HAP-1 (cell line): ENCODE measurements at regions of chrX and their contacts with region 1.

Region 1: DNA sequence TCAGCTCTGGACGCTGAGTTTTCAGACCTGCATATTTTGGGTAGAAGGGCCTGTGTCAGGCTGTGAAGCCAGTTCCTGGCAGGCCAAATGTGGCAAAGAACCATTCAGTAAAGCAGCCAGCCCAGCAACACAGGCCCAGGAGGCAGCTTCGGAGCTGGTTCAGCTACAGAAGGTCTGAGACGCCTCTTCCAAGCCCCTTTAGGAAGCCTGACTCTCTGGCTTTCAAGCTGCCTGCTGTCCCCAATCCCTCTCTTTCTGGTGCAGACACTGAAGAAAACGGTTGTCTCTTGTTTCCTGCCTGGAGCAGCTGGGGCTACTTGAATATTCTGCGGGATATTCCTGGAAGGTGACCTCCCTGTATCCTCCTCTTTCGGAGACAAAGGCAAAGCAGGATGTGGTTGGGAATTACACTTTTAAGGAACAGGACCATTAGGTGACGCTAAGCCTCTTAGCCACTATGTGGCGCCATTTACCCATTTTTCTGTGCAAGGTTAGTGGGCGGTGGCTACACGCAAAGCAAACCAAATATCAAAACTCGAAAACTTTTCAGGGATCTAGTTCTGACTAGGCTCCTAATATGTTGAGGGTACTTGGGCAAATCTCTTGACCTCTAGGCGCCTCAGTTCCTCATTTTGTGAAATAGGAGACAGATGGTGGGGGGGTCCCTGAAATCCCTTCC is 47.2 kb upstream of the LAS1L start:
- DNase-seq: peak; percentile 75 to 76
- H3K4me3 ChIP-seq: no peak overlapping the region
- H3K4me1 ChIP-seq: no peaks in the 10 kb centered on the region
- H3K27me3 ChIP-seq: no peaks in the 10 kb centered on the region

Region 2: DNA sequence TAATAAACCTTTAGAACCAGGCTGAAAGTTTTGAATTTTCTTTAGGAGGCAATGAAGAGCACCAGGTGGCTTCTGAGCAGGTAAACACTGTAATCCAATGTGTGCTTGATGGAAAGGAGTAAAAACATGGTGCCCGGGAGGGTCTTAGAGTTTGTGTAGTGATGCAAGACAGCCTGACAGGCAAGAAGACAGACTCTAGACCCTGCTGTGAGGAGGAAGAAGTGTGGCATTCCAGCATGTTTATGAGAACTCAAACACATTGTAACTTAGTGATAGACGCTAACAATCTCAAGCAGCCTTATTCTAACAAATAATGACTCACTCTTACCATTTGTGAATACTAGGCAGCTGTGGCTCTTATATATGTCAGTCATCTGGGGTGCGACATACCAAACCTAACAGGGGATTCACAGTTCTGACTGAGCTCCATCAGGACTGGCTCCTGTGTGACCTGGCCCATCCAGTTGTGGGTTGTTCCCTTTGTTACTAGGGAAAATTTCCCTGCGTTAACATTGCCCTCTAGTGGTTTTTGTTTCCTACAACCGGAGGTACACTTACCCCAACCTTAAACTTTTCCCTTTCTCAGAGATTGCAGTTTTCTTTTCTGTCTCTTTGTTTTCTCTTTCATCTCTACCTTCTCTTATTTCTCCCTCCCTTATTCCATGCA is 404.3 kb after region 1 on chrX:
- in situ Hi-C with region 1: loop called (anchors 10 kb)
- DNase-seq: peak; percentile 29 to 37
- H3K4me3 ChIP-seq: no peak overlapping the region
- H3K4me1 ChIP-seq: no peaks in the 10 kb centered on the region
- H3K27me3 ChIP-seq: no peaks in the 10 kb centered on the region

Region 3: DNA sequence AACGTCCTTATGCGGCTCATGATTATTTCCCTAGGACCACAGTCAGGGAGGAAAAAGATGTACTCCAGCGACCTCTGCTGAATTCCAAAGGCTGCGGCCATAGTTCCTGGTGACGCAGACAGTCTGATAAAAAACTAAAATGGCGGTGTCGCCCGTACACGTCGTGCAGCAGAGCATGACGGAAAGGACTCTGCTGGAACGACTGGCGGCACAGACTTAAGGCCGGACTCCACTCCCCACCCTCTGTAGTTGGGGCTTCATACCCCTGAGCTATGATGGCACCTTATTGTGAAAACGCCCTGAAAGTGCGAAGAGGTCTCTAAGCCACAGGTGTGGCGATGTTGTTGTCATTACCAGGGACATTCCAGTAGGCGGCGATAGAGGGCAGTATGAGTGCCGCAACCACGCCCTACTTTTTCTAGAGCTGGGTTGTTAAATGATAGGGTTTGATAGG is 1147.0 kb after region 1 on chrX:
- in situ Hi-C with region 1: loop called (anchors 10 kb)
- DNase-seq: peak; percentile 55 to 73
- H3K4me3 ChIP-seq: peak overlapping the region; percentile 41
- H3K4me1 ChIP-seq: no peaks in the 10 kb centered on the region
- H3K27me3 ChIP-seq: no peaks in the 10 kb centered on the region